ENCODE measurements at regions of chr1 and their contacts with region 1.

Region 1: DNA sequence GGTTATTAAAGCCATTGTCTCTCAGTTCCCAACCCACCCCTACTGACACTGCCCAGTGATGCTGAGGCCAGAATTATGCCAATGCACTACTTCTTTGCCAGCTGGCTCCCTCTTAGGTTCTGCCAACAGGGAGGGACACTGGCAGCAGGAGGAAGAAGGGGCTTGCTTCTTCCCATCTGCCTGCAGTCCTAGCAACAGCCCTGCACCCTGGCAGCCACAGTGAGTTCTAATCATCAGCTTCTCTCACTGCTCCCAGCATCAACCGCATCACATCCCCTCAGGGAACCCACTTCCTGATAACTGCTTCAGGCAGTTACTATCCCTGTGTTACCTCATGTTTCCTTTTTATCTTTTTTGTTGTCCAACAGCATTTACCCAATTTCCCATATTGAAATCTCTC is 86.2 kb downstream of the UBR4 start:
- DNase-seq: no peak
- H3K4me3 ChIP-seq: no peak overlapping the region
- H3K27ac ChIP-seq: no peak overlapping the region
- H3K4me1 ChIP-seq: no peaks in the 10 kb centered on the region
- H3K27me3 ChIP-seq: no peaks in the 10 kb centered on the region
- CTCF ChIP-seq: no peak

Region 2: DNA sequence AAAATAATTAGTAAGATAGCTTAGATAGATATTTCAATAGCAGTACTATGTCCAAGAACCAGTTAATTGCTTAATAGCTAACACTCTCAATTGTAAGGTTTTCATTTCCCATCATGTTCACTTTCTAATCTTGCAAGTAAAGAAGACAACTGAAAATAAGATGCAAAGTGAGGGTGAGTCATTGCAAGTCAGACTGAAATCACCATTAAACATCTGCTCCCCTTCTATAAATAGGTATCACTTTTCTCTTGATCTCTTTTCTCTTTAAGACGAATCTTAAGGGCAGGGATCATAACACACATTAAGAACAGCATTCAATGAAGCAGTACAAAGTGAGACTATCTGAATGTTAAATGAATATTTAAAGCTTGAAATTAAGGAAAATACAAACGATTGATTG is 45.8 kb after region 1 on chr1:
- CTCF ChIA-PET with region 1: no interaction called
- dilution Hi-C with region 1: loop called (anchors 5 kb)
- in situ Hi-C with region 1: no loop called
- intact Hi-C with region 1: loop called (anchors 5 kb)
- DNase-seq: no peak
- H3K4me3 ChIP-seq: no peak overlapping the region
- H3K27ac ChIP-seq: no peak overlapping the region
- H3K4me1 ChIP-seq: no peaks in the 10 kb centered on the region
- H3K27me3 ChIP-seq: no peaks in the 10 kb centered on the region
- CTCF ChIP-seq: no peak

Measured in mammary epithelial cell (primary cell).